Activated B cell treated with CpG ODN at 0.5 μM for 24 hours (primary cell): ENCODE measurements at regions of chr12 and their contacts with region 1.

Region 1: GRCh38 chr12:76348079-76348901 is at the start of gene BBS10:
- DNase-seq: peak; percentile 81
- ATAC-seq: peak; percentile 98
- H3K4me3 Mint-ChIP-seq: peak within 1 kb of the TSS; percentile 95
- H3K27ac Mint-ChIP-seq: peak within 1 kb of the TSS; percentile 93
- H3K4me1 Mint-ChIP-seq: peaks cover 35% of the 10 kb centered on the region
- H3K27me3 Mint-ChIP-seq: no peaks in the 10 kb centered on the region
- CTCF ChIP-seq: no peak
- total RNA-seq, gene BBS10: 7.9 and 8.0 TPM in 2 replicates

Region 2: DNA sequence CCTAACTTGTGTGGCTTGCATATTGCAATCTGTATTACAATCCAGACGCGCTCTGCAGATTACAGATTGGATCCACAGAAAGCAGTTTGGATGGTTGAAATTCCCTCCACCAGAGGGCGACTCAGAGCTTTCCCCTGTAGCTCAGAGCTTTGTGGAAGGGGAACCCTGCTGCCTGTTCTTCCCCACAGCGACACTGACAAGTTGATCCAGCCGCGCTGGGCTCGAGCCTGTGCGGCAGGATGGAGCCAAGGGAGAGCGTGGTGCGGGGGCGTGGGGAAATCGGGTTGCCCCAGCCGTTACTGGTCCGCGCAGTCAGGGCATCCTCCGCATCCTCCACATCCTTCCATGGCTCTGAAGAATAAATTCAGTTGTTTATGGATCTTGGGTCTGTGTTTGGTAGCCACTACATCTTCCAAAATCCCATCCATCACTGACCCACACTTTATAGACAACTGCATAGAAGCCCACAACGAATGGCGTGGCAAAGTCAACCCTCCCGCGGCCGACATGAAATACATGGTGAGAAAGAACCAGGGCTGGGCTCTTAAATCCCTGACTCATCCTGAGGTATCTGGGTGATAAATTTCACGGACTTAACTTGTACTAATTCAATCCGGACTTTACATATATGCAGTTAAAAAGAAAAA is 1013.8 kb before region 1 on chr12 and contains the start of gene GLIPR1L1:
- CTCF ChIA-PET with region 1: no interaction called
- POLR2A ChIA-PET with region 1: no interaction called
- intact Hi-C with region 1: loop called (anchors 5 kb)
- DNase-seq: peak; percentile 46
- ATAC-seq: peak; percentile 75
- H3K4me3 Mint-ChIP-seq: peak within 1 kb of the TSS; percentile 60
- H3K27ac Mint-ChIP-seq: no peak within 1 kb of the TSS
- H3K4me1 Mint-ChIP-seq: peaks cover 16% of the 10 kb centered on the region
- H3K27me3 Mint-ChIP-seq: peaks cover 23% of the 10 kb centered on the region
- CTCF ChIP-seq: peak; percentile 87
- total RNA-seq, gene GLIPR1L1: not detected in 2 replicates

Region 3: GRCh38 chr12:75511116-75512048 is 836.9 kb before region 1 on chr12 and contains the start of gene KRR1:
- CTCF ChIA-PET with region 1: interaction called, 4 read pairs
- POLR2A ChIA-PET with region 1: interaction called, 14 read pairs
- intact Hi-C with region 1: loop called (anchors 1 kb)
- DNase-seq: peak; percentile 72
- ATAC-seq: peak; percentile 96
- H3K4me3 Mint-ChIP-seq: peak within 1 kb of the TSS; percentile 99
- H3K27ac Mint-ChIP-seq: peak within 1 kb of the TSS; percentile 99
- H3K4me1 Mint-ChIP-seq: peaks cover 27% of the 10 kb centered on the region
- H3K27me3 Mint-ChIP-seq: no peaks in the 10 kb centered on the region
- CTCF ChIP-seq: no peak
- total RNA-seq, gene KRR1: 75.0 and 85.1 TPM in 2 replicates

Region 4: GRCh38 chr12:76176940-76177339 is 171.3 kb before region 1 on chr12:
- CTCF ChIA-PET with region 1: no interaction called
- POLR2A ChIA-PET with region 1: no interaction called
- intact Hi-C with region 1: loop called (anchors 5 kb)
- DNase-seq: no peak
- ATAC-seq: no peak
- H3K4me3 Mint-ChIP-seq: no peak overlapping the region
- H3K27ac Mint-ChIP-seq: no peak overlapping the region
- H3K4me1 Mint-ChIP-seq: peaks cover 21% of the 10 kb centered on the region
- H3K27me3 Mint-ChIP-seq: no peaks in the 10 kb centered on the region
- CTCF ChIP-seq: no peak

Region 5: GRCh38 chr12:76337583-76337982 is 10.7 kb before region 1 on chr12:
- CTCF ChIA-PET with region 1: no interaction called
- POLR2A ChIA-PET with region 1: no interaction called
- intact Hi-C with region 1: no loop called
- DNase-seq: no peak
- ATAC-seq: no peak
- H3K4me3 Mint-ChIP-seq: no peak overlapping the region
- H3K27ac Mint-ChIP-seq: no peak overlapping the region
- H3K4me1 Mint-ChIP-seq: no peaks in the 10 kb centered on the region
- H3K27me3 Mint-ChIP-seq: no peaks in the 10 kb centered on the region
- CTCF ChIP-seq: no peak

Region 6: DNA sequence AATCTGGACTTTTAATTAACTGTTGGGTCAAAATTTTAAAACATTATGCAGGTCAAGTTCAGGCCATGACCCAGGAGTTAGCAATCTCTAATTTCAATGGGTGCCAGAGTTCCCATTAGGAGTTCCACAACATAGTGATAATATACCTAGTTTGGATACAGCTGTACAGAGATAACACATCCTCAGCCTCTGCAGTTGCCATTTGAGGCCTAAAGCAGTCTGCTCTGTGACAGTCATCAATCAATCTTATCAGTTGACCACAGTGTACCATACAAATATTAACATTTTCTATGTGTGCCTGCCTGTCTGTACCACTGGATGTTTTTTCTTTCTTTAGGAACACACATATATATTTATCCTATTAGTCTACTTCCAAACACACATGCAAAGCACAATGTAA is 54.0 kb after region 1 on chr12:
- CTCF ChIA-PET with region 1: no interaction called
- POLR2A ChIA-PET with region 1: no interaction called
- intact Hi-C with region 1: no loop called
- DNase-seq: no peak
- ATAC-seq: no peak
- H3K4me3 Mint-ChIP-seq: no peak overlapping the region
- H3K27ac Mint-ChIP-seq: no peak overlapping the region
- H3K4me1 Mint-ChIP-seq: no peaks in the 10 kb centered on the region
- H3K27me3 Mint-ChIP-seq: no peaks in the 10 kb centered on the region
- CTCF ChIP-seq: no peak

Region 7: GRCh38 chr12:77065361-77066204 is 717.3 kb after region 1 on chr12 and contains the start of gene E2F7:
- CTCF ChIA-PET with region 1: no interaction called
- POLR2A ChIA-PET with region 1: no interaction called
- intact Hi-C with region 1: loop called (anchors 10 kb)
- DNase-seq: peak; percentile 81
- ATAC-seq: peak; percentile 86
- H3K4me3 Mint-ChIP-seq: peak within 1 kb of the TSS; percentile 90
- H3K27ac Mint-ChIP-seq: no peak within 1 kb of the TSS
- H3K4me1 Mint-ChIP-seq: peaks cover 36% of the 10 kb centered on the region
- H3K27me3 Mint-ChIP-seq: peaks cover 5% of the 10 kb centered on the region
- CTCF ChIP-seq: no peak
- total RNA-seq, gene E2F7: 0.71 and 0.95 TPM in 2 replicates